ENCODE measurements at regions of chr7 and their contacts with region 1.

Region 1: DNA sequence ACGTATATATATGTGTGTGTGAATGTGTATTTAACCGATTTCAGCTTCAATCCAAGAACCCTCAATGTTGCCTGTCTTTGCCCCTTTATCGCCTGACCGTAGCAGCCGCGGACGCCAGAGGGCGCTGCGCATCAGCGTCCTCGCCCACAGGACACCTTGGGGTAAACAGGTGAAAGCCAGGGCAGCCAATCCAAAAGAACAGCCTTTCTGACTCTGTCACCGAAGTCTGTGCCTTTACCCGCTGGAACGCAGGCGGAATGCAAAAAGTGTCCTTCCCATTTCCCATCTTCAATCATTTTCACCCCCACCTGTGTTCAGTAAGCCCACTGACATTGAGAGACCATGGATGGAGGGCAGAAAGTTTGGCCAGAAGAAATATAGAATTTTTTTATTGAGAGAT is 3.6 kb downstream of the NXPH1 start:
- DNase-seq: peak; percentile 64 to 76
- H3K4me3 ChIP-seq: no peak overlapping the region
- H3K27ac ChIP-seq: no peak overlapping the region
- H3K4me1 ChIP-seq: peaks cover 7 to 40% (median 18%) of the 10 kb centered on the region in 4 donors
- H3K27me3 ChIP-seq: peaks cover 39 to 100% (median 88%) of the 10 kb centered on the region in 3 donors
- CTCF ChIP-seq: peak in 5 of 7 experiments; percentile 48 to 71 (median 66)
- EP300 ChIP-seq: no peak
- POLR2A ChIP-seq: no peak

Region 2: DNA sequence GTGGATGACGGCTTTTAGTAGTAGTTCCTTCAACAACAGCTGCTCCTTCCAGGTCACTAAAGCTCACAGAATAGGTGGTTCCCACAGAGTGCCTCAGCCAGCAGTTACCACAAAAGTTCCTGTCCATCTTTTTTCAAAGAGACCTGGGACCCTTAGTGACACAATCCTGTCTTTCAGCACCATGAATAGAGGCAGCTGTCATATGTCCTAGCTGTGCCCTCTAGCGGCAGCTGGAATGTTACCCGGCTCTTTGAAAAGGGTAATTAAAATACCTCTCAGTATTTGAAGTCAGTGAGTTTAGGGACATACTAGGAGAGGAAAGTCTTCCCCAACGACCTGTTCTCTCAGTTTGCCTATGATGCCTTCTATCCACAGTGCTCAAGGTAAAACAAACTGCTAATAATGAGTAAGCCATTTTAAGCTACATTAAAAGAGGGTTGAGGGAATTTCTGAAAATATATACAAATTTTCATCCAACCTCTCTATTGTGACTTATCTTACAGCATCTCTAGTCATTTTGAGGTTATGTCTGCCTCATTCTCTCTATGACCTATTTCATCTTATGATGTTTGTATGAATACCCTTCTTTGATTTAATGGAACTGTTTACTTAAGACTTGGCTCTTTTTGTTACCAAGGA is 287.2 kb after region 1 on chr7:
- intact Hi-C with region 1: loop called (anchors 10 kb)
- DNase-seq: peak; percentile 51 to 63
- H3K4me3 ChIP-seq: no peak overlapping the region
- H3K27ac ChIP-seq: no peak overlapping the region
- H3K4me1 ChIP-seq: no peaks in the 10 kb centered on the region
- H3K27me3 ChIP-seq: no peaks in the 10 kb centered on the region
- CTCF ChIP-seq: peak in 3 of 7 experiments; percentile 24 to 52 (median 48)
- EP300 ChIP-seq: no peak
- POLR2A ChIP-seq: no peak

Measured in stomach (tissue), 19 donors.